Common myeloid progenitor, CD34-positive (primary cell): ENCODE measurements at regions of chr19 and their contacts with region 1.

Region 1: GRCh38 chr19:48588670-48589399 is 17.7 kb upstream of the SPACA4 start:
- DNase-seq: peak; percentile 81 to 88 (median 85)
- H3K4me3 ChIP-seq: peak overlapping the region; percentile 13 to 77 (median 48)
- H3K27ac ChIP-seq: no peak overlapping the region
- H3K4me1 ChIP-seq: peaks cover 0 to 10% (median 6%) of the 10 kb centered on the region in 4 experiments
- H3K27me3 ChIP-seq: peaks cover 0 to 1% (median 0%) of the 10 kb centered on the region in 5 experiments

Region 2: DNA sequence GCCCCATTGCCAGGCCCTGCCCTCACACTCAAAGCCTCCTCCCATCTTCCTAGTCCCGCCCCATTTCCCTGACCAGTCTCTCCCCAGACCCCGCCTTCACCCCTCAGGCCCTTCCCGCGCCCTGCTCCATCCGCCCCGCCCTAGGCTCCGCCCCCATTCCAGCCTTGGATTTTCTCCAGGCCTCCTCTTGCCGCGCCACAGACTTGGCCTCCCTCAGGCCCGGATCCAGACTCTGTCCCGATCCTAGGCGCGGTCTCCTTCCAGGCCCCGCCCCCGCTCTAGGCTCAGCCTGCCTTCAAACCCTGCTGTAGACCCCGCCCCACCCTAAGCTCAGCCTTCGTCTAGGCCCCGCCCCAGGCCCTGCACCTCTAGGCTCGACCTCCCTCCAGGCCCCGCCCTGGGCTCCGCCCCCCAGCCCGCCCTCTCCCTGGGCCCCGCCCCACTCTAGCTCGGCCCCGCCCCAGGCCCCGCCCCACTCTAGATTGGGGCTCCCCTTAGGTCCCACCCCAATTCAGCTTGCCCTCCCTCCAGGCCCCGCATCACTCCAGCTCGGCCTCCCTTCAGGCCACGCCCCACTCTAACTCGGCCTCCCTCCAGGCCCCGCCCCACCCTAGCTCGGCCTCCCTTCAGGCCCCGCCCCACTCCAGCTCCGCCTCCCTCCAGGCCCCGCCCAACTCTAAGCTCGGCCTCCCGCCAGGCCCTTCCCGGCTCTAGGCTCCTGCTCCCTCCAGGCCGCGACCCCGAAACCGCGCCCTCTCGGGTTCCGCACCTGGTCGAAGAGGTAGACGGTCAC is 95.7 kb before region 1 on chr19:
- CTCF ChIA-PET with region 1: interaction called, 98 read pairs
- POLR2A ChIA-PET with region 1: no interaction called
- DNase-seq: peak; percentile 91 to 96 (median 96)
- H3K4me3 ChIP-seq: peak overlapping the region; percentile 19 to 81 (median 64)
- H3K27ac ChIP-seq: peak overlapping the region in 1 of 2 experiments; percentile 43
- H3K4me1 ChIP-seq: peaks cover 0 to 45% (median 36%) of the 10 kb centered on the region in 4 experiments
- H3K27me3 ChIP-seq: peaks cover 0 to 29% (median 3%) of the 10 kb centered on the region in 5 experiments

Region 3: GRCh38 chr19:48569814-48570213 is 19.0 kb before region 1 on chr19:
- CTCF ChIA-PET with region 1: interaction called, 22 read pairs
- POLR2A ChIA-PET with region 1: no interaction called
- DNase-seq: no peak
- H3K4me3 ChIP-seq: no peak overlapping the region
- H3K27ac ChIP-seq: no peak overlapping the region
- H3K4me1 ChIP-seq: no peaks in the 10 kb centered on the region
- H3K27me3 ChIP-seq: peaks cover 0 to 11% (median 9%) of the 10 kb centered on the region in 5 experiments

Region 4: GRCh38 chr19:48608798-48609263 is 20.0 kb after region 1 on chr19:
- CTCF ChIA-PET with region 1: interaction called, 57 read pairs
- POLR2A ChIA-PET with region 1: interaction called, 4 read pairs
- DNase-seq: peak; percentile 74 to 82 (median 81)
- H3K4me3 ChIP-seq: peak overlapping the region in 4 of 7 experiments; percentile 20 to 70 (median 54)
- H3K27ac ChIP-seq: no peak overlapping the region
- H3K4me1 ChIP-seq: peaks cover 0 to 8% (median 0%) of the 10 kb centered on the region in 4 experiments
- H3K27me3 ChIP-seq: no peaks in the 10 kb centered on the region